HepG2 (cell line): ENCODE measurements at regions of chr22 and their contacts with region 1.

Region 1: GRCh38 chr22:30968924-30969539 is at the start of gene TUG1:
- DNase-seq: peak; percentile 96
- ATAC-seq: peak; percentile 97
- H3K4me3 ChIP-seq: peak within 1 kb of the TSS; percentile 80 to 89 (median 88)
- H3K27ac ChIP-seq: peak within 1 kb of the TSS; percentile 84
- H3K4me1 ChIP-seq: peaks cover 69% of the 10 kb centered on the region
- H3K27me3 ChIP-seq: no peaks in the 10 kb centered on the region; a peak in 1 of 5 replicates
- CTCF ChIP-seq: no peak
- EP300 ChIP-seq: no peak
- POLR2A ChIP-seq: peak; percentile 89
- RAD21 ChIP-seq: peak; percentile 62
- total RNA-seq, gene TUG1: 32.8 and 35.2 TPM in 2 replicates

Region 2: GRCh38 chr22:30890686-30891442 is 78.2 kb before region 1 on chr22:
- CTCF ChIA-PET with region 1: no interaction called
- POLR2A ChIA-PET with region 1: no interaction called
- in situ Hi-C with region 1: no loop called
- intact Hi-C with region 1: no loop called
- DNase-seq: no peak
- ATAC-seq: peak; percentile 86
- H3K4me3 ChIP-seq: no peak overlapping the region
- H3K27ac ChIP-seq: no peak overlapping the region
- H3K4me1 ChIP-seq: peaks cover 9% of the 10 kb centered on the region
- H3K27me3 ChIP-seq: no peaks in the 10 kb centered on the region
- CTCF ChIP-seq: peak; percentile 92
- EP300 ChIP-seq: no peak
- POLR2A ChIP-seq: no peak
- RAD21 ChIP-seq: peak; percentile 83

Region 3: DNA sequence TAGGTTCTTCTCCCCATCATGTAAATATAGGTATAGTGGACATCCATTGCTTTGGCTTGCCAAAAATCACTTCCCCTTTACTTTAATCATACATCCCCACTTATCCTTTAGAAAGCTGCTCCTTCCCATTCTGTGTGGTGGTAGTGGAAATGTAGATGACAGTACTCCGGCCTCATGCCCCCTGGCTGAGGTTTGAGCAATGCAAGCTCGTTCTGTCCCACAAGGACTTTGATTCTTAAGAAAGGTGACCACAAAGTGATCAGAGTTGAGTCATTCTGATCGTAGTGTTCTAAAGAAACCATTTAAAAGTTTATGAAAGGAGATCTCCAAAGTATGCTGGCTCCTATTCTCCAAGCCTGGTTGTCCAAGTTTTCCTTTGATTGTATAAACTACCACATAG is 10.9 kb after region 1 on chr22:
- CTCF ChIA-PET with region 1: no interaction called
- POLR2A ChIA-PET with region 1: interaction called, 29 read pairs
- in situ Hi-C with region 1: no loop called
- intact Hi-C with region 1: no loop called
- DNase-seq: no peak
- ATAC-seq: peak; percentile 57; the same call in 2 of the 3 replicates
- H3K4me3 ChIP-seq: no peak overlapping the region
- H3K27ac ChIP-seq: no peak overlapping the region
- H3K4me1 ChIP-seq: peaks cover 26% of the 10 kb centered on the region
- H3K27me3 ChIP-seq: no peaks in the 10 kb centered on the region
- CTCF ChIP-seq: no peak
- EP300 ChIP-seq: no peak
- POLR2A ChIP-seq: no peak
- RAD21 ChIP-seq: no peak

Region 4: GRCh38 chr22:31055635-31056159 is 86.7 kb after region 1 on chr22:
- CTCF ChIA-PET with region 1: no interaction called
- POLR2A ChIA-PET with region 1: interaction called, 29 read pairs
- in situ Hi-C with region 1: no loop called
- intact Hi-C with region 1: loop called (anchors 5 kb)
- DNase-seq: peak; percentile 98
- ATAC-seq: peak; percentile 98
- H3K4me3 ChIP-seq: peak overlapping the region in 1 of 3 experiments; percentile 32; a peak in 2 of 6 replicates
- H3K27ac ChIP-seq: peak overlapping the region; percentile 63
- H3K4me1 ChIP-seq: peaks cover 55% of the 10 kb centered on the region
- H3K27me3 ChIP-seq: no peaks in the 10 kb centered on the region
- CTCF ChIP-seq: no peak; the same call in 1 of the 2 replicates
- EP300 ChIP-seq: peak; percentile 95 to 96
- POLR2A ChIP-seq: no peak
- RAD21 ChIP-seq: peak; percentile 64

Region 5: DNA sequence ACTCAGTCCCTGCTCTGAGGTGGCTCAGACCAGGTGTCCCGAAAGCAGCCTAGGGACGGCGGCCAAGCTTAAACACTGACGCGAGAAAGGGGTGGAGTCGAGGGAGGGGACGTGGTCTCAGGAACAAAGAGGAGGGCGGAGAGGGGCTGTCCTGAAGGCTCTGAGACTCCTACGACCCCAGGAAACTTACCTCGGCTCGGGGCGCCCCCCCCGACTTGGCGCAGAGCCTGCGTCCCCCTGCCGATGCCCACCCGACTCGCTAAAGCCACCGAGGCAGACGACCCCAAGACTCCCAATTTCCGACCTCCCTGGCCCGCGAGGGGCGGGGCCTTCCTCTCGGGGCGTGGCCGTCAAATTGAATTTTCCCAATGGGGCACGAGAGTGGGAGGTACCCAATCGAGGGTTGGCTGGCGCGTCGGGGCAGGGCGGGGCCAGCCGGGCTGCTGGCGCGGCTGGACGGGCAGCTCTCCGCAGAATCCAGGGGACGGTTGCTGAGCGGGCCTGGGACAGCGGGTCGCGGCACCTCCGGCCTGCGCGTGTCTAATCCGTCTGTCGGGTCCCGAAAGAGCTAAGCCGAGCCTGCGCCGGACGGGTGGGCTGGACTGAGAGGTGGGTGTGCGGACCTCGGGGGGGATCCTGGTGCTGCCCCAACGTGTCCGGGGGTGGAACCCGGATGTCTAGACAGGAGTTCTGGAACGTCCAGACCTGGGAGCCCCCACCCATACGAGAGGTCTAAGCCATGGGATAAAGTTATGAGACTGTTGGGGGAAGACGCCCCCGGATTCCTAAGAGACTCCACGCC is 112.0 kb after region 1 on chr22 and contains the start of gene SMTN:
- CTCF ChIA-PET with region 1: no interaction called
- POLR2A ChIA-PET with region 1: interaction called, 113 read pairs
- in situ Hi-C with region 1: loop called (anchors 5 kb)
- intact Hi-C with region 1: loop called (anchors 5 kb)
- DNase-seq: peak; percentile 86
- ATAC-seq: peak; percentile 87
- H3K4me3 ChIP-seq: peak within 1 kb of the TSS; percentile 71 to 92 (median 89)
- H3K27ac ChIP-seq: peak within 1 kb of the TSS; percentile 74
- H3K4me1 ChIP-seq: peaks cover 47% of the 10 kb centered on the region
- H3K27me3 ChIP-seq: no peaks in the 10 kb centered on the region; a peak in 1 of 5 replicates
- CTCF ChIP-seq: no peak; the same call in 1 of the 2 replicates
- EP300 ChIP-seq: no peak
- POLR2A ChIP-seq: peak; percentile 77 to 93; a peak in 3 of 4 replicates
- RAD21 ChIP-seq: no peak
- total RNA-seq, gene SMTN: 6.9 and 14.7 TPM in 2 replicates

Region 6: DNA sequence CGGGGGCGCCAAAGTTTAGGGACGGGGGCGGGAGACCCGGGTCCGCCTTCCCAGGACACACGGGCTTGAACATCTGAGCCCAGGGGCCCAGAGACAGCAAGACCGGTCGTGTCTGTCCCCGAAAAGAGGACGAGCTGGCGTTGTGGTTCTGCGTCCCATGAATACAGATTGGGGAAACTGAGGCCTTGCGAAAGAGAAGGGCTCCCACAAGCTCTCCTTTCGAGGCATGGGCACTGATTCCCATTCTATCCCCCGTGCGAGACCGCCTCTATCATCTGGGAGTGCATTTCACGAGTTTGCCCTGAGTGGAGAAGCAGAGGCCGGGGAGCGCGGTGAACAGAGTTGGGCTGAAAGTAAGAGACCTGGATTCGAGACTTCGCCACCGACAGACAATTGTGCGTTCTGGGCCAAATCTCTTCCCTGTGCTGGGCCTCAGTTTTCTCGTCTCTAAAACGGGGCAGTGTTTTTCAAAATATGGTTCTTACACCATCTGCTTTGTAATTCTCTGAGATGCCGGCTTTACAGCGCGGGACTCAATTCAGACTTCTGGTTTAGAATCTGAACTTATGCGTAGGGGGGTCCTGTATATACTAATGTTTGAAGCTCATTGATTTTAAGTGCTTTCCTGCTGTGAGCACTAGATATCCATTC is 191.4 kb after region 1 on chr22:
- CTCF ChIA-PET with region 1: no interaction called
- POLR2A ChIA-PET with region 1: interaction called, 12 read pairs
- in situ Hi-C with region 1: no loop called
- intact Hi-C with region 1: no loop called
- DNase-seq: no peak
- ATAC-seq: peak; percentile 79
- H3K4me3 ChIP-seq: peak overlapping the region; percentile 84 to 92 (median 90)
- H3K27ac ChIP-seq: peak overlapping the region; percentile 64
- H3K4me1 ChIP-seq: peaks cover 29% of the 10 kb centered on the region
- H3K27me3 ChIP-seq: no peaks in the 10 kb centered on the region; a peak in 1 of 5 replicates
- CTCF ChIP-seq: no peak
- EP300 ChIP-seq: no peak
- POLR2A ChIP-seq: no peak
- RAD21 ChIP-seq: no peak